PC-9 (cell line): ENCODE measurements at regions of chr3 and their contacts with region 1.

Region 1: GRCh38 chr3:168714609-168715240 is 619.0 kb upstream of the GOLIM4 start:
- DNase-seq: no peak
- H3K4me3 ChIP-seq: no peak overlapping the region
- H3K27ac ChIP-seq: no peak overlapping the region
- H3K4me1 ChIP-seq: no peaks in the 10 kb centered on the region
- H3K27me3 ChIP-seq: no peaks in the 10 kb centered on the region
- CTCF ChIP-seq: no peak

Region 2: DNA sequence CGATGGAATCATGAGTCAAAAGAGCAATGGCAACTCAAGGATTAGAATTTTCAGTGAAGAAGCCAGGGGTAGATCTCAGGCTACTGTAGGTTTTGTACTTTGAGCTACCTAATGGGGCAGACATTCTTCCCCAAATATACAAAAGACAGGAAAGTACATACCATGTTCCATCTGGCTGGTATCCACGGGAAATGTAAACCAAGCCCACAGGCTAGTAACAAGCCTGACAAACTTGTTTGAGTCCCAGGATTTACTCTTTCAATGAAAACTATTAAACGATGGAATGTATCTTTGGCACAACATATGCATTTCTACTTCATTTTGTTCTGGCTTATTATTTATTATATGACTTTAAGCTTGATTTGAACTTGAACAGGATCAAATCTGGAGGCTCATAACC is 574.8 kb before region 1 on chr3:
- CTCF ChIA-PET with region 1: no interaction called
- POLR2A ChIA-PET with region 1: interaction called, 25 read pairs
- intact Hi-C with region 1: no loop called
- DNase-seq: peak in 1 of 2 experiments; percentile 34
- H3K4me3 ChIP-seq: no peak overlapping the region
- H3K27ac ChIP-seq: no peak overlapping the region
- H3K4me1 ChIP-seq: no peaks in the 10 kb centered on the region
- H3K27me3 ChIP-seq: no peaks in the 10 kb centered on the region
- CTCF ChIP-seq: no peak

Region 3: GRCh38 chr3:168696051-168696450 is 18.7 kb before region 1 on chr3:
- CTCF ChIA-PET with region 1: no interaction called
- POLR2A ChIA-PET with region 1: interaction called, 10 read pairs
- intact Hi-C with region 1: no loop called
- DNase-seq: no peak
- H3K4me3 ChIP-seq: no peak overlapping the region
- H3K27ac ChIP-seq: no peak overlapping the region
- H3K4me1 ChIP-seq: no peaks in the 10 kb centered on the region
- H3K27me3 ChIP-seq: no peaks in the 10 kb centered on the region
- CTCF ChIP-seq: no peak

Region 4: DNA sequence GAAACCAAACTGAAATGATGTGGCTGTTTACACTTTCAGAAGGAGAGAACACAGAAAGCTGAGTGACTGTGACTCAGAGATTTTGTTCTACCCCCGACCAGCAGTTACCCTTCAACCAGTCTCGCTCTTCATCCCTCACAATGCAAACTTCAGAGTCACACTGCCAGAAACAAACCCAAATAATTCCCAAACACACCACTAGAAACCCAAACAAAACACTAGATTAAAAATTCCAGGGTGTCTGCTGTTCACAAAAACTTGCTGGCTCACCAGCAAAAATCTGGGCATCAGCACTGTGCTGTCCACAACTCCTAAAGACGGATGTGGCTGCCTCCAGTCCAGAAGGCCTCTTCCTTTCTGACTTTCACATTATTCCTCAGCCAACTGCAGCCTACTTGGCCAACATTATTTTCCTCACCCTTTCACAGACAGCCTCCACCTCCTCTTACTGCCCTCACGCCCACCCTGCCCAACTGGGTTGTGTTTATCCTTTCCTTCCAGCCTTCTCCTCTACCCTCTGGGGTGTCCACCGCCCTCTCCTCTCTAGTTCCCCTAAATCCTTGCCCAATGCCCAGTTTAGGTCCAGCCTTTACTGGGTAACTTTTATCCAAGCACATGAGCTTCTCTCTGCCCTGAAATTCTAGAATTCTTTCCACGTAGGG is 877.4 kb after region 1 on chr3:
- CTCF ChIA-PET with region 1: no interaction called
- POLR2A ChIA-PET with region 1: no interaction called
- intact Hi-C with region 1: no loop called
- DNase-seq: no peak
- H3K4me3 ChIP-seq: no peak overlapping the region
- H3K27ac ChIP-seq: no peak overlapping the region
- H3K4me1 ChIP-seq: no peaks in the 10 kb centered on the region; the same call in 1 of the 2 replicates
- H3K27me3 ChIP-seq: no peaks in the 10 kb centered on the region
- CTCF ChIP-seq: no peak